ENCODE measurements at regions of chrX and their contacts with region 1.

Region 1: DNA sequence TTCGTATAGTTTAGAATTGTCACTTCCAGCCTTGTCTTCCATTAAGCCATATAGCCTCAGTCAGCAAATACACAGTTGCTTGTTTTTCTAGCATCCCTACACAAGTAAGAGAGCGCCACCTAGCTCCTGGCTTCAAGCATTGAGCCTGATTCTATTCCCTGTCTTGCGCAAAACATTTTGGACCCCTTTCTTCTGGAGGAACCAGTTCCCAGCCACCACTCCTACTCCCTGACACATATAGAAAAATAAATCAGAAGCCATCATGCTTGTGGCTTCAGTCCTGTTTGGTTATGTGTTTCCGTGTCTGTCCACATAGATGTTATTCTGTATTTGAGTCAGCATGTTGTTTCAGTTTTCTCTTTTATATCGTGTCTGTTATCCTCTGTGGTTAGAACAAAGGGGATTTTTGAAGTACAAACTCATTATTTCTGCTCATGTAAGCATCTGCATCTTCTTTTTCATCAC is 59.9 kb downstream of the GK start:
- DNase-seq: peak; percentile 71
- ATAC-seq: peak; percentile 90
- H3K4me3 Mint-ChIP-seq: peak overlapping the region; percentile 19
- H3K27ac Mint-ChIP-seq: peak overlapping the region; percentile 81
- H3K4me1 Mint-ChIP-seq: peaks cover 33% of the 10 kb centered on the region
- H3K27me3 Mint-ChIP-seq: no peaks in the 10 kb centered on the region

Region 2: GRCh38 chrX:30615229-30615628 is 97.9 kb before region 1 on chrX:
- CTCF ChIA-PET with region 1: no interaction called
- POLR2A ChIA-PET with region 1: no interaction called
- intact Hi-C with region 1: loop called in 1 of 2 experiments (anchors 1 kb)
- DNase-seq: no peak
- ATAC-seq: peak; percentile 100
- H3K4me3 Mint-ChIP-seq: no peak overlapping the region
- H3K27ac Mint-ChIP-seq: no peak overlapping the region
- H3K4me1 Mint-ChIP-seq: peaks cover 6% of the 10 kb centered on the region
- H3K27me3 Mint-ChIP-seq: peaks cover 1% of the 10 kb centered on the region

Region 3: GRCh38 chrX:30652527-30653414 is 60.3 kb before region 1 on chrX:
- CTCF ChIA-PET with region 1: no interaction called
- POLR2A ChIA-PET with region 1: no interaction called
- intact Hi-C with region 1: loop called (anchors 2 kb)
- DNase-seq: peak; percentile 95
- ATAC-seq: peak; percentile 67
- H3K4me3 Mint-ChIP-seq: peak overlapping the region; percentile 86
- H3K27ac Mint-ChIP-seq: peak overlapping the region; percentile 98
- H3K4me1 Mint-ChIP-seq: peaks cover 36% of the 10 kb centered on the region
- H3K27me3 Mint-ChIP-seq: no peaks in the 10 kb centered on the region

Region 4: DNA sequence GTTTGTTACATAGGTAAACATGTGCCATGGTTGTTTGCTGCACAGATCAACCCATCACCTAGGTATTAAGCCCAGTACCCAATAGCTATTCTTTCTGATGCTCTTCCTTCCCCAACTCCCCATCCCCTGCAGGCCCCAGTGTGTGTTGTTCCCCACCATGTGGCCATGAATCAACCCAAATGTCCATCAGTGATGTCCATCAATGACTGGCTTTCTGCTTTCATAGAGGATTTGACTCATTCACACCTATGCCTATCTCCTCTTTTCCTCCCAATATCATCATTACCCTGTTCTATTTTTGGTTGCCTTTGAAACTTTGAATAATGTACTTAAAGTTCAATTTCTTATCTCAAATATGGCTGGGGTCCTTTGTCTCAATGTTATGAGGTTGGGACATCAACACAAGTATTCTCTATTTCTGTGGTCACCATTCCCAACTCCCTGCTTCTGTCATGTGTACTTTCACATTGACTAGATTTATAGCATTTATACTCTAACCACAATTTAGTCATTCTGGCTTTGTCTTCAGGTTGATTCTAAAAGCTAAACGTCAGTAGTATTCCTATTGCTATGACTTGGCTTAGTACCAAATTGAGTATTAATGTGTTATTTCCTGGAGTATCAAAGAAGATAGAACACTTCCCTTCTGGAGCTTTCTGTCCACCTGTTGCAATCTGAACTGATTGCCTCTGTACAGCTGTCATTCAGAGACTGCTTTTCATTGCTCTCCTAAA is 68.8 kb after region 1 on chrX:
- CTCF ChIA-PET with region 1: no interaction called
- POLR2A ChIA-PET with region 1: no interaction called
- intact Hi-C with region 1: loop called (anchors 1 to 2 kb)
- DNase-seq: no peak
- ATAC-seq: peak; percentile 81
- H3K4me3 Mint-ChIP-seq: no peak overlapping the region
- H3K27ac Mint-ChIP-seq: peak overlapping the region; percentile 37
- H3K4me1 Mint-ChIP-seq: peaks cover 29% of the 10 kb centered on the region
- H3K27me3 Mint-ChIP-seq: peaks cover 13% of the 10 kb centered on the region

Region 5: GRCh38 chrX:30889147-30890140 is 176.4 kb after region 1 on chrX and contains the start of gene TAB3:
- CTCF ChIA-PET with region 1: no interaction called
- POLR2A ChIA-PET with region 1: no interaction called
- intact Hi-C with region 1: loop called in 1 of 2 experiments (anchors 1 kb)
- DNase-seq: peak; percentile 95
- ATAC-seq: peak; percentile 88
- H3K4me3 Mint-ChIP-seq: peak within 1 kb of the TSS; percentile 78
- H3K27ac Mint-ChIP-seq: peak within 1 kb of the TSS; percentile 95
- H3K4me1 Mint-ChIP-seq: peaks cover 39% of the 10 kb centered on the region
- H3K27me3 Mint-ChIP-seq: no peaks in the 10 kb centered on the region
- total RNA-seq, gene TAB3: 18.7 to 20.1 TPM

Region 6: GRCh38 chrX:31652650-31653049 is 939.6 kb after region 1 on chrX:
- CTCF ChIA-PET with region 1: no interaction called
- POLR2A ChIA-PET with region 1: no interaction called
- intact Hi-C with region 1: no loop called
- DNase-seq: no peak
- ATAC-seq: no peak
- H3K4me3 Mint-ChIP-seq: no peak overlapping the region
- H3K27ac Mint-ChIP-seq: no peak overlapping the region
- H3K4me1 Mint-ChIP-seq: no peaks in the 10 kb centered on the region
- H3K27me3 Mint-ChIP-seq: no peaks in the 10 kb centered on the region

Measured in activated CD4-positive, alpha-beta T cell treated with anti-CD3 and anti-CD28 coated beads for 36 hours (primary cell).